ENCODE measurements at regions of chr10 and their contacts with region 1.

Region 1: DNA sequence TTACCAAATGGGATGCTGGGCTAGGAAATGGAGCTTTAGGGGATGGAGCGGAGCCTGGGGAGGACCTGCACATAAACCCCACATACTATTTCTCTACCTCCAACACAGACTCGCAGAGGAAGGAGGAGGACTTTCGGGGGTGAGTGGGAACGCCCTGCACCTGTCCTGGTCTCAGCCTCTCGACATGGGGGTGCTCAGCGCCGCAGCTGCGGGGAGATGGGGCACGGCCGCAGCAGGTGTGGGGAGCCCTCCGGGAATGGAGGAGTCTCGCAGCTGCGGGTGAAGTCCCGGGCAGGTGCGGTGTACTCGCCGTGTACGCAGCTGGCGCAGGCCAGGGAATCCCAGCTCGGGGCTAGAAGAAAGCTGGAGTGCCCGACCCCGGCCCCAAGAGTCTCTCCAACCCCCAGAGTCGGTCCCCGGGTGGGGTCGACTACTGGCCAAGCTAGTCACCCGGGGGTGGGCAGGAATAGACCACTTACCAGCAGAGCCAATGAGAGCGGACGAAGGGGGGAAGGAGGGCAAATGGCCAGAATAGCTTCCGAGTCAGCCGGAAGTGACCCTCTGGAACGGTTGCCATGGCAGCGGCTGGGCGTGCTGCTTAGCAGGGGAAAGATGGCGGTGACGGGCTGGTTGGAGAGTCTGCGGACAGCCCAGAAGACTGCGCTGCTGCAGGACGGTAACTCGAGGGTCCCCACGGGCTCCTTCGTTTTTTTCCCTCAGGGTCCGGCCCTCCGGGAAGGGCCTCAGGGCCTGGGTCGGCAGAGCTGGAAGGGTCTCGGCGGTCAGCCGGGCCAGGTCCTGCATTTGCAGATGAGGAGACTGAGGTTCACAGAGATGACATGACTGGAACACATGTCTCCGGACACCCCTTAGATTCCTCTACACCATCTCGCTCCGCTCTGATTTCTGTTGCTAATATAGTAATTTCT is at the starts of genes DPCD and POLL:
- DNase-seq: peak; percentile 94 to 95
- ATAC-seq: peak; percentile 99
- H3K4me3 ChIP-seq: peak within 1 kb of the TSS; percentile 65 to 95 (median 92)
- H3K27ac ChIP-seq: peak within 1 kb of the TSS; percentile 68 to 87 (median 81)
- H3K4me1 ChIP-seq: peaks cover 19% of the 10 kb centered on the region in 2 donors
- H3K27me3 ChIP-seq: no peaks in the 10 kb centered on the region
- CTCF ChIP-seq: no peak
- POLR2A ChIP-seq: peak in 1 of 2 donors; percentile 23
- total RNA-seq, gene DPCD: 17.8 to 38.4 (median 22.9) TPM
- total RNA-seq, gene POLL: 15.4 to 33.1 (median 29.4) TPM

Region 2: GRCh38 chr10:103396064-103396788 is 1808.2 kb after region 1 on chr10 and contains the starts of genes ATP5MK and PDCD11:
- in situ Hi-C with region 1: no loop called
- intact Hi-C with region 1: loop called (anchors 5 kb)
- DNase-seq: peak; percentile 96 to 98
- ATAC-seq: peak; percentile 99 to 100
- H3K4me3 ChIP-seq: peak within 1 kb of the TSS; percentile 88 to 96 (median 94)
- H3K27ac ChIP-seq: peak within 1 kb of the TSS; percentile 91 to 97 (median 94)
- H3K4me1 ChIP-seq: peaks cover 39 to 43% of the 10 kb centered on the region in 2 donors
- H3K27me3 ChIP-seq: no peaks in the 10 kb centered on the region
- CTCF ChIP-seq: peak in 2 of 5 experiments; percentile 12 to 22
- POLR2A ChIP-seq: peak; percentile 65 to 78
- total RNA-seq, gene ATP5MK: 436 to 724 (median 552) TPM
- total RNA-seq, gene PDCD11: 16.7 to 22.7 (median 19.5) TPM

Measured in gastrocnemius medialis (tissue), 4 donors.